ENCODE measurements at regions of chr7 and their contacts with region 1.

Region 1: DNA sequence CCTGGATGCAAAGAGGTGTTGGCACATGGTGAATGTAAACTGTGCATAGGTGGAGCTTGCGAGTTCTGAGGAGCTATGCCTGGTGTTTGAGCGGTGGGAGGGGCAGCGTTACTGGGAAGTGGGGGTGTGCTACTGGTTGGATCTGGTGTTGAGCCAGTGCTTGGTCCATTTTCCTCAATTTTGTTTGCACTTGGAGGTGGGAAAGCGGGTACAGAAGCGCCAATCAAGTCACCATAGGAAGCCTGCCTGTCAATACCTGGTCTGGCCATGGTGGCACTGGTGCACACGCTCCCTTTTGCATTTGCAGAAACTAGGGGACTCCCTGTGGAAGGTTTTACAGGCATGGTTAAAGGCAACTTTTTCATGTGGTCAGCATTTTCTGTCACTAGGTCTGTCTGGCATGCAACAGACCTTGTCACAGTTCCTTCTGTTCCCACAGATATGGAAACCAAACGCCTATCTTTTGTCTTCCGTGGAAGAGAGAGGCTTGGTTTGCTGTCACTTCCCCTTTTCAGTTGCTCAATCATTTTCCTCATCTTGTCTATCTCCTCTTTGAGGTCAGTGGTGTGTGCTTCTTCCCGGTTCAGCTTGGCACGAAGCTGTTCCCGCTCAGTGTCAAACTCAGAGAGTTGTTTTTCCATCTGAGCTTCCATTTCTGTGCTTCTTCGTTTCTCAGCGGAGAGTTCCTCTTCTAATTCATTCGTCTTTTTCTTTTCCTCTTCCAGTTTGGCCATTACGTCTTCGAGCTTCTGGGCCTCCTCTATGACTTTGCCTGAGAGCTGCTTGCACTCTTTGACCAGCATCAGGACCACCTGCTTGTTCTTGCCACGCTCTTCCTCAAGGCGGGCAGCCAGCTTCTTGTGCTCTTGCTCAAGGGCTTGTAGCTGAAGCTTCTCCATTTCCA is 81.1 kb downstream of the CTTNBP2 start:
- H3K4me3 Mint-ChIP-seq: peak overlapping the region; percentile 67
- H3K27ac Mint-ChIP-seq: peak overlapping the region; percentile 93
- H3K4me1 Mint-ChIP-seq: peaks cover 64% of the 10 kb centered on the region
- H3K27me3 Mint-ChIP-seq: no peaks in the 10 kb centered on the region

Region 2: GRCh38 chr7:117731455-117731854 is 60.7 kb before region 1 on chr7:
- intact Hi-C with region 1: loop called (anchors 5 kb)
- H3K4me3 Mint-ChIP-seq: no peak overlapping the region
- H3K27ac Mint-ChIP-seq: peak overlapping the region; percentile 83
- H3K4me1 Mint-ChIP-seq: peaks cover 40% of the 10 kb centered on the region
- H3K27me3 Mint-ChIP-seq: peaks cover 1% of the 10 kb centered on the region

Region 3: GRCh38 chr7:117808341-117808757 is 16.2 kb after region 1 on chr7:
- intact Hi-C with region 1: loop called (anchors 2 kb)
- H3K4me3 Mint-ChIP-seq: no peak overlapping the region
- H3K27ac Mint-ChIP-seq: peak overlapping the region; percentile 32
- H3K4me1 Mint-ChIP-seq: peaks cover 16% of the 10 kb centered on the region
- H3K27me3 Mint-ChIP-seq: peaks cover 2% of the 10 kb centered on the region